ENCODE measurements at regions of chr4 and their contacts with region 1.

Region 1: GRCh38 chr4:98658287-98659105 is at the start of gene TSPAN5:
- DNase-seq: peak; percentile 88
- ATAC-seq: peak; percentile 96
- total RNA-seq, gene TSPAN5: 2.1 TPM

Region 2: DNA sequence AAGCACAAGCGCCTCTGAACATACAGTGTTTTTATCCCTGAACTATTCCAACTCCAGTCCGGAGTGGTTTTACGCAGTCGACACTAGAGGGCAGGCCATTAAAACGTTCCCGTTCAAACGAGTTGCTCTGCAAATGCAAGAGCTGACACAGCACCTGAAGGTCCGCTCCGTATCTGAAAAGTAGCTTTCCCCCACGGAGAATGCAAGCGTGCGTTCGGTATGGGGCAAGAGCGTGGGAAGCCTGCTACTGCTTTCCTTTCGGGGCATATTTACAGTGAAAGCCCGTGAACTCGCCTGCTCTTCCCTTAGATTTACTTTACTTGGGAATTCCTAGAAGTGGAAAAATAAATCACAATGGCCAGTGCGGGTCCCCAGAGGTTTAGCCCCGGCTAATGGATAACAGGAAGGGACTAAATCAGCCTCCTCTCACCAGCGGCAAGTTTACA is 190.8 kb before region 1 on chr4:
- intact Hi-C with region 1: loop called (anchors 1 kb)
- DNase-seq: no peak
- ATAC-seq: peak; percentile 89

Region 3: GRCh38 chr4:98626350-98626749 is 32.1 kb before region 1 on chr4:
- intact Hi-C with region 1: loop called (anchors 2 kb)
- DNase-seq: no peak
- ATAC-seq: peak; percentile 31